Naive thymus-derived CD4-positive, alpha-beta T cell (primary cell): ENCODE measurements at regions of chr2 and their contacts with region 1.

Region 1: GRCh38 chr2:239216614-239217273 is 184.1 kb downstream of the HDAC4 start:
- DNase-seq: peak in 1 of 9 donors; percentile 58
- ATAC-seq: peak; percentile 71
- H3K4me3 ChIP-seq: no peak overlapping the region
- H3K4me3 Mint-ChIP-seq: peak overlapping the region; percentile 48 to 90 (median 69)
- H3K27ac ChIP-seq: no peak overlapping the region
- H3K27ac Mint-ChIP-seq: peak overlapping the region in 8 of 9 donors; percentile 57 to 89 (median 78)
- H3K4me1 ChIP-seq: peaks cover 0 to 42% of the 10 kb centered on the region in 2 donors
- H3K4me1 Mint-ChIP-seq: peaks cover 57 to 86% (median 73%) of the 10 kb centered on the region in 7 donors
- H3K27me3 ChIP-seq: no peaks in the 10 kb centered on the region
- H3K27me3 Mint-ChIP-seq: no peaks in the 10 kb centered on the region

Region 2: DNA sequence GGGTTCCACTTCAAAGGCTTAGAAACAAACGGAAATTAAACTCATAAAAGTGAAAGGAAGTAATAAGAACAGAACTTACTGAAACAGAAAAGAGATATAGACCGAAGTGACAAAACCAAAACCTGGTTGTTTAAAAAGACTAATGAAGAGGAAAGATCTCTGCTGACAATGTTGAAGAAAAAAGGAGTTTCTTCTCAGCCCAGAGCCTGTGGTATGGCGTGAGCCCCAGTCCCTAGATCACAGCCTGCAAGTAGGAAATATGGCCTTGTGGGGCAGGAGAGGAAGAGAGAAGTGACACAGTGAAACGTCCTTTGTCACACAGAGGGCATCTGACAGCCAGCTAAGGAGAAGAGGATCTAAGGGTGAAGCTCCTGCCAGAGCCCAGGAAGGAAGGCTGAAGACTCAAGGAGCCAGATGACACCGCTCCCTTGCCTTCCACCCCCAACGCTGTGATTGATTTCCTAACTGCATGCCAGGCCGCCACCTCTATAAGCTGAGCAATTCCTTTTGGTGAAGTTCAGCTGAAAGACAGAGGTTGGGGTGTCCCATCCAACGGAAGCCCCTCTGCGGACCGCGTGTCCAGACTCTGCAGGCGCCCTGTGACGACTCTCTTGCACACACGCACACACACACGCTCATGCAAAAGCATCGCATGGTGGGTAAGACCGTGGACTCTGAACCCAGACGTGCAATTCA is 43.0 kb after region 1 on chr2:
- CTCF ChIA-PET with region 1: no interaction called
- POLR2A ChIA-PET with region 1: no interaction called
- intact Hi-C with region 1: loop called (anchors 2 to 10 kb)
- DNase-seq: peak in 5 of 9 donors; percentile 18 to 39 (median 36)
- ATAC-seq: peak; percentile 71
- H3K4me3 ChIP-seq: peak overlapping the region; percentile 31
- H3K4me3 Mint-ChIP-seq: peak overlapping the region; percentile 75 to 93 (median 83)
- H3K27ac ChIP-seq: peak overlapping the region; percentile 68
- H3K27ac Mint-ChIP-seq: peak overlapping the region; percentile 83 to 96 (median 93)
- H3K4me1 ChIP-seq: peaks cover 46 to 89% of the 10 kb centered on the region in 2 donors
- H3K4me1 Mint-ChIP-seq: peaks cover 57 to 97% (median 88%) of the 10 kb centered on the region in 7 donors
- H3K27me3 ChIP-seq: no peaks in the 10 kb centered on the region
- H3K27me3 Mint-ChIP-seq: no peaks in the 10 kb centered on the region